ENCODE measurements at regions of chr1 and their contacts with region 1.

Region 1: DNA sequence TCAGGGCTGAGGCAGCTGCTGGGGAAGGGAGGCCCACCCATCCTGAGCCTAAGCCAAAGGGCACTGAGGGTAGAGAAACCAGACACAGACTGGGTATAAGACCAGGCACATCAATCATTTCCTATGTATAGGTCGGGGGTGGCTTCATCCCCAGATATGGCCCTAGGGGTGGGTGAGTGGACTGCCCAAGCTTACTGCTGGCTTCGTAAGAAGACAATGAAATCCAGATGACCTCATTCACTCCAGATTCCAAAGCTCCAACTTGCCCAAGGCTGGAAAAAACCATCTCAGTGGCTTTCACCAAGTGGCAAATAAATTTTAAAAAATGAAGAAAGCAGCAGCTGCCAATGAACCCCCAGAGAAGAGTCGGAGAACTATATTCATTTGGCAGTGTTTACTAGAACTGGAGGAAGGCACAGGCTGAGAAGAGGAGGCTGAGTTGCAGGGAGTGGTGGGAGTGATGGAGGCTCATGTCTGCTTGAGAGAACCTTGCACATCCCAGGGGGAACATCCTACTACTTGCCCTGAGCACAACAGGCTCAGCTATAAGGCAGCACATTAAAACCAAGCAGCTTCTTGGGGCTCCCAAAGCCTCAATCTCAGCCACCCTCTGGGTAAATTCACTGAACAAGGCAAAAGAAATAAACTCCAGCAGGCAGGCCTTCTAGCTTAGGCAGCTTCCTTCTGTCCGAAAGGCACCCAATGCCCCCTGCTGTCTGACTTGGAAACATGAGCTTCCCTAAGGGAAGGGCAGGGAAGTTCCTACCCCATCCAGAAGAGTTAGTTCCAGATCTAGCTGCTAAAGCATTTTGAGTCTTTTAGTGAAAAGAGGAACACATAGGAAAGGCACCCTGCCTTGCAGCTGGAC is 14.1 kb downstream of the PEA15 start:
- DNase-seq: peak; percentile 69
- ATAC-seq: peak; percentile 87
- H3K4me3 Mint-ChIP-seq: no peak overlapping the region
- H3K27ac Mint-ChIP-seq: peak overlapping the region; percentile 79
- H3K4me1 Mint-ChIP-seq: peaks cover 15% of the 10 kb centered on the region
- H3K27me3 Mint-ChIP-seq: no peaks in the 10 kb centered on the region
- CTCF ChIP-seq: no peak

Region 2: GRCh38 chr1:160070243-160071163 is 148.8 kb before region 1 on chr1:
- CTCF ChIA-PET with region 1: no interaction called
- POLR2A ChIA-PET with region 1: no interaction called
- DNase-seq: peak; percentile 93
- ATAC-seq: peak; percentile 94
- H3K4me3 Mint-ChIP-seq: peak overlapping the region; percentile 96
- H3K27ac Mint-ChIP-seq: peak overlapping the region; percentile 50; the same call in 1 of the 2 replicates
- H3K4me1 Mint-ChIP-seq: peaks cover 32% of the 10 kb centered on the region
- H3K27me3 Mint-ChIP-seq: peaks cover 82% of the 10 kb centered on the region
- CTCF ChIP-seq: no peak

Region 3: GRCh38 chr1:160108888-160109662 is 110.2 kb before region 1 on chr1:
- CTCF ChIA-PET with region 1: interaction called, 90 read pairs
- POLR2A ChIA-PET with region 1: no interaction called
- DNase-seq: no peak
- ATAC-seq: peak; percentile 61
- H3K4me3 Mint-ChIP-seq: no peak overlapping the region; the same call in 1 of the 2 replicates
- H3K27ac Mint-ChIP-seq: peak overlapping the region; percentile 30
- H3K4me1 Mint-ChIP-seq: peaks cover 50% of the 10 kb centered on the region
- H3K27me3 Mint-ChIP-seq: peaks cover 5% of the 10 kb centered on the region; the same call in 1 of the 2 replicates
- CTCF ChIP-seq: peak; percentile 33; the same call in 1 of the 2 replicates

Region 4: DNA sequence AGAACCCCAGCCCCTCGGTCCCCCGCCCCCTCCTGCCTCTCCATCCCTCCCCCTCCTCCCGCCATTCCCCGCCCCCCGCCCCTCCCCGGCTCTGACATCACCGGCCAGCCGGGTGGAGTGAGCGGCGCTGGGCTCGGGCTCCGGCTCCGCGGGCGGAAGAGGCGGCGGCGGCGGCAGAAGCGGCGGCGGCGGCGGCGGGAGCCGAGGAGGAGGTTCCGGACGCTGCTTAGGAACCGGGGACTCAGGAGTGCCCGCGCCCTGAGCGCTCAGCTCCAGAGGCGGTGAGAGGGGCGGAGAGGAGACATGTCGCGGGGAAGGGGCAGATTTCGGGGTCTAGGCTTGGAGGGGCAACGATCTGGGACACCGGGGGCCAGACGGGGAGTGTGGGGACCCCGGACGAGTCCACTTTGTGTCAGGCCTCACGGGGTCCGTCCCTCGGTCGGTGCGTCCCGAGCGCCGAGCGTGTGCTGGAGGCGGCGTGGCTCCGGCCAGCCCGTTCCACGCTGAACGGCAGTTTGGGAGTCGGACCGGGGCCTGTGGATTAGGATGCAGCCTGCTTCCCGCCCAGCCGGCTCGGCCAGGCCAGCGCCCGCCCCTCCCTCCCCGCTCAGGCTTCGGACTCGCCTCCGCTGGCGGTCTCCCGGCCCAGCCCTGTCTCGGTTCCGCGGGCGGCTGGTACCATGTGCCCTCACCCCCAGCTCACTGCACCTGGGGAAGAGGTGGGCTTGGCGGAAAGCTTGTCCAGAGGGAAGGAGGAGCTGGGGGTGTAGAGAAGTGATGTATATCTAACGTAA is 13.9 kb before region 1 on chr1 and contains the start of gene PEA15:
- CTCF ChIA-PET with region 1: interaction called, 29 read pairs
- POLR2A ChIA-PET with region 1: interaction called, 3 read pairs
- DNase-seq: peak; percentile 81
- ATAC-seq: peak; percentile 56
- H3K4me3 Mint-ChIP-seq: peak within 1 kb of the TSS; percentile 77
- H3K27ac Mint-ChIP-seq: no peak within 1 kb of the TSS
- H3K4me1 Mint-ChIP-seq: peaks cover 55% of the 10 kb centered on the region
- H3K27me3 Mint-ChIP-seq: no peaks in the 10 kb centered on the region; the same call in 1 of the 2 replicates
- CTCF ChIP-seq: no peak
- total RNA-seq, gene PEA15: 43.6 to 56.3 TPM (median 46.9 TPM) in 3 replicates

Region 5: GRCh38 chr1:160232911-160233310 is 13.6 kb after region 1 on chr1:
- CTCF ChIA-PET with region 1: interaction called, 18 read pairs
- POLR2A ChIA-PET with region 1: no interaction called
- DNase-seq: no peak
- ATAC-seq: no peak
- H3K4me3 Mint-ChIP-seq: no peak overlapping the region
- H3K27ac Mint-ChIP-seq: no peak overlapping the region
- H3K4me1 Mint-ChIP-seq: peaks cover 11% of the 10 kb centered on the region
- H3K27me3 Mint-ChIP-seq: no peaks in the 10 kb centered on the region
- CTCF ChIP-seq: no peak

Region 6: DNA sequence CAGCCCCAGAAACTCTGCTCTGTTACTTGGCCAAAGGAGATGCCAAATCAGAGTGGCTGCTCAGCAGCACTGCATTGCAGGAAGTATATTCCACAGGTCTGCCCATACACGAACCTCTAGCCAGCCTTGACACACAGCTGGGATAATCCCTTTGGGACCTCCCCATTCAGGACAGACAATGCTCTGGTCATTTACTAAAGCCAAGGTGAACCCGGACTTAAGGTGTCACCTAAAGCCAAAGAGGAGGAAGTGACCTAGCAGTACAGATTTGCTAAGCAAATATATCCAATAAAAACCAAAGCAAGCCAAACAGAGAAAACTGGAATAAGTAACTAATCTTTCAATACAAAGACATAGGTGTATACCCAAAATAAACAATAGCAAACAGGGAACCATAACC is 96.1 kb after region 1 on chr1:
- CTCF ChIA-PET with region 1: no interaction called
- POLR2A ChIA-PET with region 1: no interaction called
- DNase-seq: no peak
- ATAC-seq: no peak
- H3K4me3 Mint-ChIP-seq: no peak overlapping the region
- H3K27ac Mint-ChIP-seq: no peak overlapping the region
- H3K4me1 Mint-ChIP-seq: no peaks in the 10 kb centered on the region
- H3K27me3 Mint-ChIP-seq: no peaks in the 10 kb centered on the region
- CTCF ChIP-seq: no peak